GM10248 (cell line): ENCODE measurements at regions of chr2 and their contacts with region 1.

Region 1: GRCh38 chr2:214816134-214816533 is 6.7 kb upstream of the BARD1 start:
- DNase-seq: no peak
- CTCF ChIP-seq: no peak

Region 2: DNA sequence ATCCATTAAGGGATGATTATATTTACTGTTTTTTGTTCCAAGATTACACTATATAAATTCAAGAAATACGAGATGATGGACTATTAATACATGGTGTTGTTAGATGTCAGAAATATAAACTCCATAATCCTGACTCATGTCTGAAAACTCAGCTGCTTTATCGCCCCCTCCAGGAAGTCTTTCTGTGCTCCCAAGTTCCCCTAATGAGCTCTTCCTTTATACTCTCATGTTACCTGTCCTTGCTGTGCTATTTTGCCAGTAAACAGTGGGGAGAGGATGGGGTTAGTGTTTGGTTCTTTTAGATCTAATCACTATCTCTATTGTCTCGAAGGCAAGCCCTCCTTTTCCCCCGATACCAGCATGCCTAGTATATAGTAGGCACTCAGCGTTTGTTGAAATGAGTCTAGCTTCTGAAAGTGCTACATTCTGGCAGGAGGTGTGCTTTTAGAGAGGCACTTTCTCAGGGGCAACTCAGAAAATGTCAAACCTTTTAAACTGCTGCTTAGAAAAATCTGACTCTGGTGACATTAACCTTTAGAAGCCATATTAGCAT is 14.7 kb after region 1 on chr2:
- CTCF ChIA-PET with region 1: interaction called, 10 read pairs
- POLR2A ChIA-PET with region 1: no interaction called
- DNase-seq: no peak
- CTCF ChIP-seq: peak; percentile 27

Region 3: DNA sequence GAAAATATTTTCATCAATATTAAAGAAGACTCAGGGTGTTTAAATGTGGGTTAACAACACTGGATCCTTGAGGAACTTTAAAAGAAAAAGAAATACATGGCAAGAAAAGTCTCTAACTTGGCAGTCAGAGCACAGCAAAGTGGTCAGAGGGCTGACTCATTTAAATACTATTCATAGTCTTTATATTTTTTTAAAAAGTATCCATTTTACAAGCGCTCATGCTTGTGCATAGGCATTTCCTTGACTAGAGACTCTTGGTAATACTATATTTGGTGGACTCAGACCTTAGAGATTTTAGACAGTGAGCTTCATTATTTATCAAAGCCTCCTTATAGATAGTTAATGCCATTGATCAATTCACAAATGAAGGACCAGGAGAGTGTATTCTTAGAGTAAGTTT is 212.1 kb after region 1 on chr2:
- CTCF ChIA-PET with region 1: no interaction called
- POLR2A ChIA-PET with region 1: no interaction called
- DNase-seq: no peak
- CTCF ChIP-seq: no peak